ENCODE measurements at regions of chr12 and their contacts with region 1.

Region 1: GRCh38 chr12:28415755-28416154 is 225.5 kb downstream of the CCDC91 start:
- DNase-seq: peak; percentile 64
- H3K4me3 ChIP-seq: no peak overlapping the region
- H3K27ac ChIP-seq: no peak overlapping the region
- H3K4me1 ChIP-seq: no peaks in the 10 kb centered on the region
- H3K27me3 ChIP-seq: no peaks in the 10 kb centered on the region
- CTCF ChIP-seq: no peak

Region 2: DNA sequence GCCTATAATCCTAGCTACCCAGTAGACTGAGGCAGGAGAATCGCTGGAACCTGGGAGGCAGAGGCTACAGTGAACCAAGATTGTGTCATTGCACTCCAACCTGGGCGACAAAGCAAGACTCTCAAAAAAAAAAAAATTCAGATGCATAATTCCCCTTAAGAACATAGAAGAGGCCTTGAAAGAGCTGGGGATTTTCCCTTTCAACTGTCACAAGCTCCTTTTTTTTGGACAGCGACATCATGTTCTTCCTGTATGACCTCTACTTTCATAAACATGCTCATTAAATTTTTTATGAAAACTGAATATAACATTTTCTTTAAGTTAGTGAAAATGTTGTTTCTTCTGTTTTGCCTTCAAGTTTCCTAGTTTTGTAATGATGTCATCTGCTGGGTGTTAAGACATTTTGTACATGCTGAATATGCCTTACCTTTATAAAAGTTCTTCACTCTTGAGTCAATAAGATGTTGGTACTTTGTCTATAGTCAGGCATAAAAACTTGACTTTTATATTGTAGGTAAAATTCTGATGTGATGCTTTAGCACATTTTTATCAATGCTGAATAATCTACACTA is 519.2 kb before region 1 on chr12:
- CTCF ChIA-PET with region 1: no interaction called
- dilution Hi-C with region 1: no loop called
- in situ Hi-C with region 1: no loop called
- intact Hi-C with region 1: no loop called
- DNase-seq: peak; percentile 19
- H3K4me3 ChIP-seq: no peak overlapping the region
- H3K27ac ChIP-seq: no peak overlapping the region
- H3K4me1 ChIP-seq: peaks cover 14% of the 10 kb centered on the region
- H3K27me3 ChIP-seq: no peaks in the 10 kb centered on the region
- CTCF ChIP-seq: no peak

Region 3: GRCh38 chr12:28460420-28461130 is 44.8 kb after region 1 on chr12:
- CTCF ChIA-PET with region 1: no interaction called
- dilution Hi-C with region 1: no loop called
- in situ Hi-C with region 1: no loop called
- intact Hi-C with region 1: no loop called
- DNase-seq: no peak
- H3K4me3 ChIP-seq: no peak overlapping the region
- H3K27ac ChIP-seq: no peak overlapping the region
- H3K4me1 ChIP-seq: no peaks in the 10 kb centered on the region
- H3K27me3 ChIP-seq: no peaks in the 10 kb centered on the region
- CTCF ChIP-seq: no peak

Region 4: DNA sequence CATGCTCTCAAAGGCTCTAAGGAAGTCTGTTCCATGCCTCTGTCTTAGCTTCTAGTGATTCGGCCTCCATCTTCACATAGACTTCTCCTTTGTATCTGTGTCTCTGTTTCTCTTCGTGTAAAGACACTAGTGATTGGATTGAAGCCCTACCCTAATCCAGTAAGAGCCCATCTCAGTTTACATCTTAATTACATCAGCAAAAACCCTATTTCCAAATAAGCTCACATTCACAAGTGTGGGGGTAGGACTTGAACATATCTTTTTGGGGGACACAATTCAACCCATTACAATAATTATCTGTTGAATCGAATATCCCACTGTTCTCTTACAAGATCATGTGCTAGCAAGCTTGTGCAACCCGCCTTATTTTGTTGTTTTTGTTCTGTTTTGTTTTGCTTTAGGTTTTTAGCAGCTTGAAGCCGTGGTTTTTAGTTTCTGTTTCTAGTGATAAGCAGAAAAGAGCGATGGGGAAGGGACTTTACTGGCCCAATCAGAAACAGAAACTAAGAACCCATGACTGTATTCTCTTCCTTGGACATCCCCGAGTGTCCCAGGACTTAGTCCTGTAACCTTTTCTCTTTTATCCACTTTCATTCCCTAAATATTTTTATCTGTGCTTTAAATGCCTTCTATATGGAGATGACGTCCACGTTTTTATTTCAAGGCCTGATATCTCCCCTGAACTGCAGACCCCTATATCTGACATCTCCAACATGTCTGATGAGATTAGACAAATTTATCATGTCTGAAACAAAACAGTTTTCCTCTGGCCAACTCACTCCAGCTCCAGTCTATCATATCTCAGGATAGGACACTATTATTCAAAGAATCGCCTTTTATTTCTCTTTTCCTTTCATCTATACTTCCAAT is 127.5 kb after region 1 on chr12:
- CTCF ChIA-PET with region 1: interaction called, 10 read pairs
- dilution Hi-C with region 1: no loop called
- in situ Hi-C with region 1: no loop called
- intact Hi-C with region 1: no loop called
- DNase-seq: no peak
- H3K4me3 ChIP-seq: no peak overlapping the region
- H3K27ac ChIP-seq: no peak overlapping the region
- H3K4me1 ChIP-seq: no peaks in the 10 kb centered on the region
- H3K27me3 ChIP-seq: no peaks in the 10 kb centered on the region
- CTCF ChIP-seq: no peak

Measured in mammary epithelial cell (primary cell).